ENCODE measurements at regions of chr19 and their contacts with region 1.

Region 1: GRCh38 chr19:15379083-15379995 is at the start of gene AKAP8:
- DNase-seq: peak; percentile 96 to 99
- H3K4me3 ChIP-seq: peak within 1 kb of the TSS; percentile 99 to 100
- H3K27ac ChIP-seq: peak within 1 kb of the TSS; percentile 99 to 100
- H3K4me1 ChIP-seq: peaks cover 19 to 38% of the 10 kb centered on the region in 2 donors
- H3K27me3 ChIP-seq: no peaks in the 10 kb centered on the region
- CTCF ChIP-seq: no peak
- total RNA-seq, gene AKAP8: 17.0 TPM

Region 2: DNA sequence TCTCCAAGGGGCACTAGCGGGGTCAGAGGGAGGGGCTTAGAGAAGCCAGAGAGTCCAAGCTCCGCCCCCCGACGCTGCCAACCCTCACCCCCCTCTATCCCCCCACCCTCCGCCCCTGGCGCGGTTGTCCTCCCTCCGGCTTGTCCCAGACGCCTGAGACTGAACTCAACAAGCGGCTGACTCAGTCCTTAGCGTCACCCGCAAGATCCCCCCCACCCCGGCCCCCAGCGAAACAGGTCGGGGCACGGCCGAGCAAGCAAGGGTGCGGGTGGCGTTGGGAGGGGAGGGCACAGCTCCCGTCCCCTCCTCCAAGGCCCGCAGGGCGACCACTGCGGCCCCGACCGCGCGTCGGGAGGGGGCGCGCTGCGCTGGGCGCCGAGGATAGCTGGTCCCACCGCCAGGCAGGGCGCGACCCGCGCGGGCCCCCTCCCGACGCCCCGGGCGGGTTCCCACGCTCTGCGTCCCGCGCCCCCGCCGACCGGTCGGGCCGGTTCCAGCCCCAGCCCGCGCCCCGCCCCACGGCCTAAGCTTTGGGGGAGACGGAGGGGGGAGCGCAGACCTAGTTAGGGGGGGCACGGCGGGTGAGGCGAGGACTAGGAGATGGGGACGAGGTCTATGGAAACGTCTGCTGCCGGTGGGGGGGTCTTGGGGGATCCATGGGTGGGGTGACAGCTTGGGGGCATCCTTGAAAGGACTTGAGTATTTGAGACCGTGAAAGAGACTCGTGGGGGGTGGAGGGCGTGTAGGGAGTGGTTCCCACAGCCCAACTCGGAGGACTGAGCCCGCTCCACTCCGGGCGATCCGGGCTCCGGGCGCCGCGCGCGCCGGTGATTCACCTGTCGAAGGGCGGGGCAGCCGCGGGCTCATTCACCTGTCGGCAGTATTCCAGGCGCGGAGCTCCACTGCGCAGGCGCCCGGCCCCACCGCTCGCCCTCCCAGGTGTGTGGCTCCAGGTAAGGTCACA is 183.7 kb before region 1 on chr19:
- intact Hi-C with region 1: loop called (anchors 5 kb)
- DNase-seq: peak; percentile 57 to 93
- H3K4me3 ChIP-seq: peak overlapping the region; percentile 58 to 69
- H3K27ac ChIP-seq: peak overlapping the region; percentile 96
- H3K4me1 ChIP-seq: peaks cover 0 to 35% of the 10 kb centered on the region in 2 donors
- H3K27me3 ChIP-seq: no peaks in the 10 kb centered on the region
- CTCF ChIP-seq: peak in 1 of 3 experiments; percentile 14

Region 3: GRCh38 chr19:15332311-15332996 is 46.9 kb before region 1 on chr19 and contains the start of gene BRD4:
- intact Hi-C with region 1: loop called (anchors 2 kb)
- DNase-seq: peak in 1 of 2 donors; percentile 80
- H3K4me3 ChIP-seq: peak within 1 kb of the TSS; percentile 97 to 98
- H3K27ac ChIP-seq: peak within 1 kb of the TSS; percentile 94 to 98
- H3K4me1 ChIP-seq: peaks cover 13 to 58% of the 10 kb centered on the region in 2 donors
- H3K27me3 ChIP-seq: no peaks in the 10 kb centered on the region
- CTCF ChIP-seq: no peak
- total RNA-seq, gene BRD4: 55.3 TPM

Region 4: GRCh38 chr19:15412832-15413231 is 33.5 kb after region 1 on chr19:
- intact Hi-C with region 1: no loop called
- DNase-seq: no peak
- H3K4me3 ChIP-seq: peak overlapping the region in 1 of 2 donors; percentile 9
- H3K27ac ChIP-seq: peak overlapping the region in 1 of 2 donors; percentile 43
- H3K4me1 ChIP-seq: peaks cover 13 to 35% of the 10 kb centered on the region in 2 donors
- H3K27me3 ChIP-seq: no peaks in the 10 kb centered on the region
- CTCF ChIP-seq: no peak

Region 5: DNA sequence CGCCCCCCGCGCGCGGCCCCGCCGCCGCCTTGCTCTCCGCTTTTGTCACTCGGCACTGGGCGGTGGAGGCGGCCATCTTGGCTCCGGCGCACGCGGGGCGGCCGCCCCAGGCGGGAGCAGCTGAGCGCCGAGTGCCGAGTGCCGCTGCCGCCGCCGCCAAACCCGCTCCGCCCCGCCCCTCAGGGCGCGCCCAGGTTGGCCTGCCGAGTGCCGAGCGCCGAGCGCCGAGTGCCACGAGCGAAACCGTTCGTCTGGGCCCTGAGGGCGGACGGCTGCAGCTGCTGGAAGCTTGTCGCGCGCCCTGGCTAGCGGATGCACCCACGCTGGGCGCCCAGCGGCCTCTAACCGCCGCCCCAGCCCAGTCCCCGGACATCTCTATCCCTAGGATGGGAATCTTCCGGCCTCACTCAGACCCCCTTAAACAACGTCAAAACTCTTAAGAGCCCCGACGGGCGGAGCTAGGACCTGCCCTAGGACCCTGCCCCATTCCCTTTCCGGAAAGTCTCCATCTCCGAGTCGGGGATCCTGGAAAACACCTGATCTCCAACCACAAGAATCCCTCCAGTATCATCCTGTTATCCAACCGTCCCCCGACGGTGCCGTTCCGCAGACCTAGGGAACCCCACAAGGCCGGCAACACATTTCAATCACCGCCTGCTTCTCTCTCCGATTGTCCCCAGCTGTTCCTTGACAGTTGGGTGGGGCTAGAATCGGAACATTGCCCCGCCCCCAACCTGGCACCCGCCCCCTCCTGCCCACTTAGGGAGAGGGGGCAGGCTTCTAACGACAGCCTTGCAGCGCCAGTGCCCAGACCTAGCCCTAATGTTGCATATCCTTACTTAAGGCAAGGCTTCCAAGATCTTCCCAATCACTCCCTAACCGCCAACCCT is 53.5 kb after region 1 on chr19:
- intact Hi-C with region 1: loop called (anchors 1 kb)
- DNase-seq: peak; percentile 33 to 93
- H3K4me3 ChIP-seq: peak overlapping the region; percentile 92 to 95
- H3K27ac ChIP-seq: peak overlapping the region; percentile 89 to 94
- H3K4me1 ChIP-seq: peaks cover 13 to 37% of the 10 kb centered on the region in 2 donors
- H3K27me3 ChIP-seq: no peaks in the 10 kb centered on the region
- CTCF ChIP-seq: no peak

Region 6: GRCh38 chr19:15555759-15556633 is 176.7 kb after region 1 on chr19:
- intact Hi-C with region 1: loop called (anchors 2 kb)
- DNase-seq: peak; percentile 73 to 94
- H3K4me3 ChIP-seq: peak overlapping the region; percentile 44 to 59
- H3K27ac ChIP-seq: peak overlapping the region in 1 of 2 donors; percentile 55
- H3K4me1 ChIP-seq: peaks cover 6 to 8% of the 10 kb centered on the region in 2 donors
- H3K27me3 ChIP-seq: no peaks in the 10 kb centered on the region
- CTCF ChIP-seq: peak; percentile 77 to 89 (median 77)